ENCODE measurements at regions of chr4 and their contacts with region 1.

Region 1: GRCh38 chr4:122716825-122717448 is 15.6 kb upstream of the BBS12 start:
- DNase-seq: peak; percentile 75 to 87 (median 80)
- ATAC-seq: peak; percentile 96
- H3K4me3 ChIP-seq: no peak overlapping the region
- H3K27ac ChIP-seq: no peak overlapping the region
- H3K4me1 ChIP-seq: peaks cover 1 to 16% of the 10 kb centered on the region in 2 experiments
- H3K27me3 ChIP-seq: no peaks in the 10 kb centered on the region
- CTCF ChIP-seq: peak; percentile 77 to 90 (median 89)
- EP300 ChIP-seq: no peak
- POLR2A ChIP-seq: no peak
- RAD21 ChIP-seq: peak; percentile 82 to 87

Region 2: GRCh38 chr4:122309988-122310626 is 406.8 kb before region 1 on chr4:
- CTCF ChIA-PET with region 1: no interaction called
- POLR2A ChIA-PET with region 1: no interaction called
- in situ Hi-C with region 1: no loop called
- intact Hi-C with region 1: loop called (anchors 5 kb)
- DNase-seq: peak; percentile 3 to 12 (median 12)
- ATAC-seq: no peak
- H3K4me3 ChIP-seq: no peak overlapping the region
- H3K27ac ChIP-seq: no peak overlapping the region
- H3K4me1 ChIP-seq: no peaks in the 10 kb centered on the region; a peak in 1 of 5 replicates
- H3K27me3 ChIP-seq: no peaks in the 10 kb centered on the region
- CTCF ChIP-seq: peak in 2 of 3 experiments; percentile 33 to 72; a peak in 3 of 6 replicates
- EP300 ChIP-seq: no peak
- POLR2A ChIP-seq: no peak
- RAD21 ChIP-seq: peak; percentile 51 to 60

Region 3: DNA sequence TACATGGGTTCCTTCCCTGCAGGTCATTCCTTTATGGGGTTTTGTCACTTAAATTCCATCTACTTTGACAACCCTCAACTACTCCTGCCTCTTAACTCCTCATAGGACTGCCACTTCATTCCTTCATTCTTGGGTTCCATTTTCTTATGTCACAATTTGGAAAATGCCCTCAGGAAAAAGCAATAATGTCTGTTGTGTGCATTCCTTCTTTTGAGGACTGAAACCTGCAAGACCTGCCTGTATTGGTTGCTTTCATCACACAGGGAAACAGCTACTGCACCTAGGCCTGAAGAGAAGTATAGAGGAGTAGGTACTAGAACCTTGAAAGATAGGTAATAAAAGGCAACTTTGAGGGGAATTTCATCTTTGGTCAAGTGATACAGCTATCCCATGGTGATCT is 268.0 kb before region 1 on chr4:
- CTCF ChIA-PET with region 1: no interaction called
- POLR2A ChIA-PET with region 1: no interaction called
- in situ Hi-C with region 1: no loop called
- intact Hi-C with region 1: no loop called
- DNase-seq: no peak
- ATAC-seq: no peak
- H3K4me3 ChIP-seq: no peak overlapping the region
- H3K27ac ChIP-seq: no peak overlapping the region
- H3K4me1 ChIP-seq: no peaks in the 10 kb centered on the region
- H3K27me3 ChIP-seq: no peaks in the 10 kb centered on the region
- CTCF ChIP-seq: no peak
- EP300 ChIP-seq: no peak
- POLR2A ChIP-seq: no peak
- RAD21 ChIP-seq: no peak

Region 4: GRCh38 chr4:122666527-122667245 is 50.3 kb before region 1 on chr4:
- CTCF ChIA-PET with region 1: no interaction called
- POLR2A ChIA-PET with region 1: no interaction called
- in situ Hi-C with region 1: no loop called
- intact Hi-C with region 1: loop called (anchors 10 kb)
- DNase-seq: no peak
- ATAC-seq: no peak
- H3K4me3 ChIP-seq: no peak overlapping the region
- H3K27ac ChIP-seq: no peak overlapping the region
- H3K4me1 ChIP-seq: peaks cover 0 to 12% of the 10 kb centered on the region in 2 experiments; a peak in 3 of 5 replicates
- H3K27me3 ChIP-seq: no peaks in the 10 kb centered on the region
- CTCF ChIP-seq: no peak
- EP300 ChIP-seq: no peak
- POLR2A ChIP-seq: no peak
- RAD21 ChIP-seq: no peak